ENCODE measurements at regions of chr1 and their contacts with region 1.

Region 1: GRCh38 chr1:156226116-156226538 is 13.3 kb downstream of the PMF1 start:
- DNase-seq: no peak
- H3K4me3 ChIP-seq: no peak overlapping the region
- H3K27ac ChIP-seq: no peak overlapping the region
- H3K4me1 ChIP-seq: peaks cover 8% of the 10 kb centered on the region
- H3K27me3 ChIP-seq: no peaks in the 10 kb centered on the region
- CTCF ChIP-seq: no peak
- POLR2A ChIP-seq: no peak

Region 2: GRCh38 chr1:155513300-155513916 is 712.7 kb before region 1 on chr1:
- intact Hi-C with region 1: no loop called
- DNase-seq: no peak
- H3K4me3 ChIP-seq: no peak overlapping the region
- H3K27ac ChIP-seq: no peak overlapping the region
- H3K4me1 ChIP-seq: peaks cover 18% of the 10 kb centered on the region
- H3K27me3 ChIP-seq: no peaks in the 10 kb centered on the region
- CTCF ChIP-seq: no peak
- POLR2A ChIP-seq: no peak

Region 3: DNA sequence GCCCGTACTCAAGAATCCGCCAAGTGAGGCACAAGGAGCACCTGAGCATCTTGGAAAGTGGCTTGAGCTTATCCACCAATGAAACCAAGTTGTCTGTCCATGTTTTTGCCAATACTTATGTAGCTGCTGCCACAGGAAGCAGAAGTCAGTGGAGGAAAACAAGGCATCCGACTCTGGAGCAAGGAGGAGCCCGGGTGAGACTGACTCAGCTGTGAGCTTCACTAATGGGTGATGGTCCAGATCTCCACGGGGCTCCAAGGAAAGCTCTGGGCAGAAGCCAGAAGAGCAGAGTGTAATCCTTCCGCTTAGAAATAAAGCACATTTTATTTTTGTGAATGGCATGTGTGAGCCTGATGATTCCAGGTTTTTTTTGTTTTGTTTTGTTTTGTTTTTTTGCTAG is 193.1 kb before region 1 on chr1:
- intact Hi-C with region 1: no loop called
- DNase-seq: no peak
- H3K4me3 ChIP-seq: no peak overlapping the region
- H3K27ac ChIP-seq: no peak overlapping the region
- H3K4me1 ChIP-seq: no peaks in the 10 kb centered on the region
- H3K27me3 ChIP-seq: no peaks in the 10 kb centered on the region
- CTCF ChIP-seq: no peak
- POLR2A ChIP-seq: no peak

Region 4: GRCh38 chr1:156091610-156092009 is 134.5 kb before region 1 on chr1:
- intact Hi-C with region 1: loop called (anchors 2 kb)
- DNase-seq: no peak
- H3K4me3 ChIP-seq: no peak overlapping the region
- H3K27ac ChIP-seq: no peak overlapping the region
- H3K4me1 ChIP-seq: peaks cover 22% of the 10 kb centered on the region
- H3K27me3 ChIP-seq: no peaks in the 10 kb centered on the region
- CTCF ChIP-seq: no peak
- POLR2A ChIP-seq: no peak

Region 5: DNA sequence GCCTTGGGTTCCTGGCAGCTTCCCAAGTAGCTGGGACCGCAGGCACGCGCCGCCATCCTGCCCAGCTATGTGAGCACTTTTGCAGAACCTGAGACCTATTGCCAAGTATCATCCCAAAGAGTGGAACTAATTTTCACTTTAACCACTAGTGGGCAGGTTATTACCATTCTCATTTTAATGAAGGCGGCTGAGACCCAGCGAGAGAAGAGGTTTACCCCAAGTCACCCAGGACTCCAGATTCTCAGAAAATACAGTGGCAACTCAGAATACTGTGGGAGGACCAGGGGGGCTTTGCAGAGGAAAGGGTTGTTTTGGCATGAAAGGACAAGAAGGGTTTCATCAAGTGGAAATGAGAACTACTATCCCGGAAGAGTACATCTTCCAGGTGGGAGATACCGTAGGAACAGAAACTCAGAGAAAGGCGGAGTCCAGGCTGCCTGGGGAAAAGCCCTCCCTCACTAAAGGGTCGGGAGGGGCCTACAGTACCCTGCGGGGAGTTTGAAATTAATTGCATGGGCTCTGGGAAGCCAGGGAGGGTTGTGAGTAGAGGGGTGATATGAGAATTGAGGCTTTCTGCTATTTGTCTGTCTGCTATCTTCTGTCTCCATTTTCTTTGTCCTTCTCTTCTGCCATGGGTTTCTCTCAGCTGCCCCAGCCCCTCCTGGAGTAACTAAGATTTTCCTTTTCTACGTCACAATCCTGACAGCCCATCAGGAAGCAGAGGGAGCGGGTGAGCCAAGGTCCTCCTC is 79.9 kb before region 1 on chr1:
- intact Hi-C with region 1: loop called (anchors 2 kb)
- DNase-seq: no peak
- H3K4me3 ChIP-seq: peak overlapping the region in 1 of 2 donors; percentile 18
- H3K27ac ChIP-seq: peak overlapping the region; percentile 3
- H3K4me1 ChIP-seq: peaks cover 32% of the 10 kb centered on the region
- H3K27me3 ChIP-seq: no peaks in the 10 kb centered on the region
- CTCF ChIP-seq: peak; percentile 41 to 73 (median 69)
- POLR2A ChIP-seq: no peak

Measured in vagina (tissue), 2 donors.